ENCODE measurements at regions of chr9 and their contacts with region 1.

Region 1: GRCh38 chr9:107282753-107283625 is at the start of gene RAD23B:
- DNase-seq: peak; percentile 99
- ATAC-seq: peak; percentile 85
- H3K4me3 Mint-ChIP-seq: peak within 1 kb of the TSS; percentile 83
- H3K27ac Mint-ChIP-seq: peak within 1 kb of the TSS; percentile 89
- H3K4me1 Mint-ChIP-seq: peaks cover 37% of the 10 kb centered on the region
- H3K27me3 Mint-ChIP-seq: no peaks in the 10 kb centered on the region
- total RNA-seq, gene RAD23B: 114 to 188 TPM

Region 2: GRCh38 chr9:106420511-106420944 is 862.5 kb before region 1 on chr9:
- CTCF ChIA-PET with region 1: no interaction called
- POLR2A ChIA-PET with region 1: no interaction called
- intact Hi-C with region 1: no loop called
- DNase-seq: peak; percentile 39
- ATAC-seq: peak; percentile 66
- H3K4me3 Mint-ChIP-seq: no peak overlapping the region
- H3K27ac Mint-ChIP-seq: no peak overlapping the region
- H3K4me1 Mint-ChIP-seq: peaks cover 13% of the 10 kb centered on the region
- H3K27me3 Mint-ChIP-seq: peaks cover 2% of the 10 kb centered on the region

Region 3: GRCh38 chr9:107080130-107080529 is 202.9 kb before region 1 on chr9:
- CTCF ChIA-PET with region 1: no interaction called
- POLR2A ChIA-PET with region 1: no interaction called
- intact Hi-C with region 1: no loop called
- DNase-seq: no peak
- ATAC-seq: no peak
- H3K4me3 Mint-ChIP-seq: no peak overlapping the region
- H3K27ac Mint-ChIP-seq: no peak overlapping the region
- H3K4me1 Mint-ChIP-seq: no peaks in the 10 kb centered on the region
- H3K27me3 Mint-ChIP-seq: peaks cover 8% of the 10 kb centered on the region

Region 4: DNA sequence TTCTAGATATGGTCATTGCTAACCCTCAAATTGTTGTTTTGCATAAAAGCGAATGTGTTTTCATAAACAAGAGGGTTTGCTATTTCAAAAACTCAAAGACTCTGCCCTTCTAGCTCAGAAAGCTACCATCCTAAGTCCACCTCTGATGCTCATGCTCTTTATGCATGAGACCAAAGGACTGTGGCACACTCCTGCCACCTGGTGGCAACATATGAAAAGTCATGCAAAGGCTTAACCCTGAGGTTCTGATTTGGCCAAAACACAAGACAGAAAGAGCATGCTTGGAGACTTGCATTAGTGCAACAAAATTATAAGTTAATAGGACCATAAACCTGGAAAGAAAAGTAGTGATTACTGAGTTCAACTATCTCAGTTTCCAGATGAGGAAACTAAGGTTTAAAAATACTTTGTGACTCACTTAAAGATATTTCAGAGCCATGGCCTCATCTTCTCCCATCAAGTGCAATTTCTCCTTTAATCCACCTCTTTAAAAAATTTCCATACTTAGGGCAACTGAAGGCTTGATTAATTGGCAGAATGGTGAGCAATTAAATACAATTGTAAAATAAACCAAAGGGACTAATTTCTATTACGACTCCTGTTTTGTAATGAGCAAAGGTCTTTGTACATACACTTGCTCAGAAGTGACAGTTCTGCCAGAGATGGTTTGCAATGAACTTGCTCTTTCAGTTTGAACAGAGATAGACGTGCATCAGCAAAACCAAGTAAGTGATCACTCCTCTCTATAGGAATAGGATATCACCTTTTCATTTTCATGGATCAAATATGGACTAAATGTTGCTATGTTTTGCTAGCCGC is 110.6 kb before region 1 on chr9:
- CTCF ChIA-PET with region 1: no interaction called
- POLR2A ChIA-PET with region 1: no interaction called
- intact Hi-C with region 1: loop called in 1 of 2 experiments (anchors 2 kb)
- DNase-seq: peak; percentile 82
- ATAC-seq: peak; percentile 49
- H3K4me3 Mint-ChIP-seq: no peak overlapping the region
- H3K27ac Mint-ChIP-seq: no peak overlapping the region
- H3K4me1 Mint-ChIP-seq: peaks cover 22% of the 10 kb centered on the region
- H3K27me3 Mint-ChIP-seq: peaks cover 7% of the 10 kb centered on the region

Region 5: DNA sequence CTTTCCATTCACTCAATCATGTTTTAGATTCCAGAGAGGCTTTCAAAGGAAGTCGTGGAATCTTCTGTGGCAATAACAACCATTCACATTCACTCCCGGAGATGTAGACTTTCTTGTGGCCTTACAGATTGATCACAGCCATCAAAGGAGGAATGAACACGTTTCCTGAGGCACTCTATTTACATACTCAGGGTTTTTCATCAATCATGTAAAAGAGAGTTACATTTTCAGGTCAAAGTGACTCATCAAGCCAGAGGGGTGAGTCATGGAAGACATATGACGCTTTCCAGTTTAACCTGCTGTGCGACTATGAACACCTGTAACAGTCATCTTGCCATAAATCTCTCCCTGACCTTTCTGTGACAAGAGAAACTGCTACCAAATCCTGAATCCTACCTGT is 39.2 kb before region 1 on chr9:
- CTCF ChIA-PET with region 1: interaction called, 3 read pairs
- POLR2A ChIA-PET with region 1: no interaction called
- intact Hi-C with region 1: loop called (anchors 1 kb)
- DNase-seq: peak; percentile 74
- ATAC-seq: peak; percentile 92
- H3K4me3 Mint-ChIP-seq: no peak overlapping the region
- H3K27ac Mint-ChIP-seq: peak overlapping the region; percentile 84
- H3K4me1 Mint-ChIP-seq: peaks cover 32% of the 10 kb centered on the region
- H3K27me3 Mint-ChIP-seq: peaks cover 2% of the 10 kb centered on the region

Region 6: GRCh38 chr9:107323836-107324585 is 41.0 kb after region 1 on chr9:
- CTCF ChIA-PET with region 1: interaction called, 3 read pairs
- POLR2A ChIA-PET with region 1: interaction called, 6 read pairs
- intact Hi-C with region 1: loop called in 1 of 2 experiments (anchors 5 kb)
- DNase-seq: no peak
- ATAC-seq: peak; percentile 81
- H3K4me3 Mint-ChIP-seq: no peak overlapping the region
- H3K27ac Mint-ChIP-seq: peak overlapping the region; percentile 20
- H3K4me1 Mint-ChIP-seq: peaks cover 11% of the 10 kb centered on the region
- H3K27me3 Mint-ChIP-seq: no peaks in the 10 kb centered on the region

Region 7: GRCh38 chr9:107489687-107490605 is 207.0 kb after region 1 on chr9 and contains the start of gene KLF4:
- CTCF ChIA-PET with region 1: no interaction called
- POLR2A ChIA-PET with region 1: no interaction called
- intact Hi-C with region 1: loop called in 1 of 2 experiments (anchors 1 kb)
- DNase-seq: peak; percentile 89
- ATAC-seq: peak; percentile 84
- H3K4me3 Mint-ChIP-seq: peak within 1 kb of the TSS; percentile 65
- H3K27ac Mint-ChIP-seq: no peak within 1 kb of the TSS
- H3K4me1 Mint-ChIP-seq: peaks cover 20% of the 10 kb centered on the region
- H3K27me3 Mint-ChIP-seq: peaks cover 58% of the 10 kb centered on the region
- total RNA-seq, gene KLF4: 0.88 to 1.2 TPM